Psoas muscle (tissue), 8 donors: ENCODE measurements at regions of chr5 and their contacts with region 1.

Region 1: GRCh38 chr5:55278778-55279177 is 28.7 kb downstream of the DHX29 start:
- DNase-seq: no peak
- ATAC-seq: no peak
- H3K4me3 ChIP-seq: no peak overlapping the region
- H3K27ac ChIP-seq: no peak overlapping the region
- H3K4me1 ChIP-seq: no peaks in the 10 kb centered on the region
- H3K27me3 ChIP-seq: no peaks in the 10 kb centered on the region
- CTCF ChIP-seq: no peak

Region 2: GRCh38 chr5:55072666-55073065 is 206.1 kb before region 1 on chr5:
- intact Hi-C with region 1: no loop called
- DNase-seq: no peak
- ATAC-seq: no peak
- H3K4me3 ChIP-seq: no peak overlapping the region
- H3K27ac ChIP-seq: no peak overlapping the region
- H3K4me1 ChIP-seq: no peaks in the 10 kb centered on the region
- H3K27me3 ChIP-seq: no peaks in the 10 kb centered on the region
- CTCF ChIP-seq: no peak

Region 3: DNA sequence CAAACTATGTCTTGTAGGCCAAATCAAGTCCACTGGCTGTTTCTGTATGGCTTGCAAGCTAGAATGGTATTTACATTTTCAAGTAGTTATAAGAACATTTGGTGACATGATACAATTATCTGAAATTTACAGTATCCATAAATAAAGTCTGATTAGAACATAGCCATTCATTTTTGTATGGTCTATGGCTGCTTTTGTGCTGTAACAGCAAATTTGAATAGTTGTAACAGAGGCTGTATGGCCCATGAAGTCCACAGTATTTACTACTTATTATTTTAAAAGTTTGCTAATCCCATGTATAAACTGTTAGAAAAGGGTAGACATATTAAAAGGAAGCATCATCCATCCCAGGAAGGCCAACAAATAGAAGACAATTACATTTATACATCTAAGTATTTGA is 11.0 kb after region 1 on chr5:
- intact Hi-C with region 1: loop called in 1 of 2 experiments (anchors 2 kb)
- DNase-seq: no peak
- ATAC-seq: no peak
- H3K4me3 ChIP-seq: no peak overlapping the region
- H3K27ac ChIP-seq: no peak overlapping the region
- H3K4me1 ChIP-seq: no peaks in the 10 kb centered on the region
- H3K27me3 ChIP-seq: no peaks in the 10 kb centered on the region
- CTCF ChIP-seq: no peak

Region 4: GRCh38 chr5:55936100-55936693 is 657.4 kb after region 1 on chr5:
- intact Hi-C with region 1: loop called in 1 of 2 experiments (anchors 5 kb)
- DNase-seq: peak; percentile 76 to 89
- ATAC-seq: peak; percentile 63 to 77 (median 72)
- H3K4me3 ChIP-seq: no peak overlapping the region
- H3K27ac ChIP-seq: no peak overlapping the region
- H3K4me1 ChIP-seq: no peaks in the 10 kb centered on the region
- H3K27me3 ChIP-seq: no peaks in the 10 kb centered on the region
- CTCF ChIP-seq: peak; percentile 89

Region 5: GRCh38 chr5:55959208-55959607 is 680.4 kb after region 1 on chr5:
- intact Hi-C with region 1: loop called in 1 of 2 experiments (anchors 10 kb)
- DNase-seq: no peak
- ATAC-seq: no peak
- H3K4me3 ChIP-seq: no peak overlapping the region
- H3K27ac ChIP-seq: no peak overlapping the region
- H3K4me1 ChIP-seq: no peaks in the 10 kb centered on the region
- H3K27me3 ChIP-seq: no peaks in the 10 kb centered on the region
- CTCF ChIP-seq: no peak